ENCODE measurements at regions of chr17 and their contacts with region 1.

Region 1: DNA sequence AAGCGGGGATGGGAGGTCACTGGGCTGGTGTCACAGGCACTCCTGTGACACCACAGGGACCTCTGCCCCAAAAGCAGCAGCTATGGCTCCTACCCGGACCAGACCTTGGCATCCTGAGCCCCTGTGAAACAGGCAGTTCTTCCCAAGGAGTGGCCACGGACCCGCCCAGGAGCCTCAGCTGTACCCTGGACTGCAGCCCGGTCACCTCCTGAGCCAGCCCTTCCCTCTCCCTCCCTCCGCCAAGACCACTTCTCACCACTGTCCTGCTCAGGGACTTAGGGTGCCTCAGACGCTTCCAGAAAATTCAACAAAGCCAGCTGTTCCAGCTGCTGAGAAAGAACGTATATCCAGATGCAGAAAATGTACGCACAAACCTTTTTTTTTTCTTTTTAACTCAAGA is 13.9 kb upstream of the NCBP3 start:
- DNase-seq: no peak
- H3K4me3 ChIP-seq: no peak overlapping the region
- H3K27ac ChIP-seq: no peak overlapping the region
- H3K4me1 ChIP-seq: peaks cover 0 to under 1% (median under 1%) of the 10 kb centered on the region in 4 donors
- H3K27me3 ChIP-seq: no peaks in the 10 kb centered on the region
- CTCF ChIP-seq: no peak
- EP300 ChIP-seq: no peak
- POLR2A ChIP-seq: no peak

Region 2: DNA sequence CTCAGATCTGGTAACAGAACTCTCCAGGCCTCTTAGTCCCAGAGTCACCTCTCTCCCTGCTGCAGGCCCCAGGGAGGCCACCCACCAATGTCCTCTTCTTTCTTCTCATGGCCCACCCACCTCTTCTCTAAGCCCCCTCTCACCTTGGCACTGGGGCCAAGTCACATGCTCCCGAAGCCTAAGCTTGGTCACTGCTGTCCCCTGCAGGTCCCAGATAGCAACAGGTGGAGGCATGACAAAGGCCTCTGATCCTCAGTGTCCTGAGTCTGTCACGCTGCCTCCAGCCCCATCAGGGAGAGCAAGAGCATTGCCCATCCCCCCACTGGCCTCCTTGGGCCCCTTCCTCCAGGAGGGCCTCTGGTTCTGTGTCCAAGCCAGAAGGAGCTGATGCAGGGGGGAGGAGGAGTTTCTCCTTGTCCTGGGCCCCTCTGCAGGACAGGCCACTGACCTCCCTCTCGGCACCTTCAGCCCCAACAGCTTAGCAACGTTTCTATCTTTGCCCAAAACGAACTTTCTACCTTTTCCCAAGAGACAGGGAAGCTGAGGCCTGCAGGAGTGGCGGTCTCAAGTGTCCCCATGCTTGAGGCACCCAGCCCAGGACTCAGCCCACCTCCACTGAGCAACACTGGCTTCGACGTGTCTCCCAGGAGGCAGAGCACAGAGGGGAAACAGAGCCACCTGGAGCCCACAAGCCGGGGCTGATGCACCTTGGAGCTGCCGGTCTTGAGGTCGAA is 47.7 kb after region 1 on chr17:
- intact Hi-C with region 1: loop called (anchors 5 kb)
- DNase-seq: no peak
- H3K4me3 ChIP-seq: no peak overlapping the region
- H3K27ac ChIP-seq: no peak overlapping the region
- H3K4me1 ChIP-seq: peaks cover 0 to 7% (median 6%) of the 10 kb centered on the region in 4 donors
- H3K27me3 ChIP-seq: no peaks in the 10 kb centered on the region
- CTCF ChIP-seq: peak in 2 of 3 experiments; percentile 28 to 30
- EP300 ChIP-seq: no peak
- POLR2A ChIP-seq: no peak

Measured in esophagus muscularis mucosa (tissue), 4 donors.